ENCODE measurements at regions of chr1 and their contacts with region 1.

Region 1: DNA sequence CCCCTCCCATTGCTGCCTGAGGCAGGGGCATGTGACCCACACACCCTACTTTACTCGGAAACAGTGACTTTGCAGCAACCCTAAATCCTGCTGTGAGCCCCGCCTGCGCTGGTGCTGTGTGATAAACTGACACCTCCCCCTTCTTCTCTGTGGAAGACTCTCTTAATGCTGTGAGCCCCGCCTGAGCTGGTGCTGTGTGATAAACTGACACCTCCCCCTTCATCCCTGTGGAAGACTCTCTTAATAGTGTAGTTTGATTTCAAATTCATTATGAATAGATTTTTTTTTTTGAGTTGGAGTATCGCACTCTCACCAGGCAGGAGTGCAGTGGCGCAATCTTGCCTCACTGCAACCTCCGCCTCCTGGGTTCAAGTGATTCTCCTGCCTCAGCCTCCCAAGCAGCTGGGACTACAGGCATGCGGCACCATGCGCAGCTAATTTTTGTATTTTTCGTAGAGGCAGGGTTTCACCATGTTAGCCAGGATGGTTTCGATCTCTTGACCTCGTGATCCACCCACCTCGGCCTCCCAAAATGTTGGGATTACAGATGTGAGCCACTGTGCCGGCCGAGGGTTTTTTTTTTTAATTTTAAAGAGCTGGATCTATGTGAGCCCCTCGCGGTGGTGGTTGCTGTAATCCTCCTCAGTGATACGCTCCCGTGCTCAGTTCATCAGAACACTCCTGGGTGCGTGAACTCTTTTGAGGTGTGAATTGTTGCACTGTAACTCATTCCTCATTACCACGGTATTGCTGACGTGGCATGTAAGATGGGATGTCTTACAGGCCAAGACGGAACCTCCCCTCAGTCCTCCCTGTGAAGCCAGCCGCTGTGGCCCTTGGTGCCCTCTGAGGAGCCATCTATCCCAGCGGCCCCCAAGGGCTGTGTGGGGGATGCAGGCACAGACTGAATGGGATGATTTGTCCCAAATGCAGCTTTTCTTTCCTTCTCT is 60.3 kb downstream of the GALNT2 start:
- DNase-seq: no peak
- H3K4me3 ChIP-seq: no peak overlapping the region
- H3K27ac ChIP-seq: no peak overlapping the region
- H3K4me1 ChIP-seq: peaks cover 0 to 33% (median 15%) of the 10 kb centered on the region in 4 donors
- H3K27me3 ChIP-seq: no peaks in the 10 kb centered on the region
- CTCF ChIP-seq: no peak

Region 2: DNA sequence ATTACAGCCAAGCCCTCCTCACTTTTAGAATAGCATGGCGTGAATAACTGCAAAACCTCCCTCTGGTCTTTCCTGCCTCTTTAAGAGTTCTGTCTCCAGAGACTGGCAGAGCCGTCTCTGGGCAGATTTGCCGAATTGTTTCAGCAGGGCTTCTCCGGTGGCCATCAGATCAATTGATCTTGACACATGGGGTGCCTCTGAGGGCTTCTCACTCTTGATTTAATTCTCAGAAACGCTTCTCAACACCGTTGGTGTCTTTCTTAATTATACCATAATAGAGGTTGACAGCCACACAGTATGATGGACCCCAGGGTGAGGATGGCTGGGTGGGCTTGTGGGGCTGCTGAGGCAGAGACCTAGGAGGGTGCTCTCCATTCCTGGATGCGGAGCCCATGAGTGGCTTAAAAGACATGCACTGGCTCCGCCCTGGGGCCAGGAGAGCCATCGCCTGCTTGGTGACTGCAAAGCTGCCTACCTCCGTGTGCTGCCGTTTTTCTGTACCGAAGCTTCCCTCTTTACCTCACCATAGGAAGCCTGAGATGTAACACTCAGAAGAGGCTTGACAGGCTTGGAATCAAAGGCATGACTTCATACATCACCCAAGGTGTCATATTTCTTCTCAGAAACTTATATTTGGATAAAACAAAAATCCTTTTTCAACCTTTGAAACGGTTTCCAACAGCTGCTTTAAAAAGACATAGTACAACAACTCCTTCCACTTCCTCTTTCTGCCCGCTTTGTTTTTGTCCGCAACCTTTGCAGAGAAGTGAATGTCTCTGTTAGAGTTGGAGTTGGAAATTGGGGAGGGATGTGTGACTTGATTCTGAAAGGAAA is 22.6 kb after region 1 on chr1:
- intact Hi-C with region 1: loop called (anchors 1 kb)
- DNase-seq: no peak
- H3K4me3 ChIP-seq: no peak overlapping the region
- H3K27ac ChIP-seq: no peak overlapping the region
- H3K4me1 ChIP-seq: peaks cover 6 to 59% (median 24%) of the 10 kb centered on the region in 4 donors
- H3K27me3 ChIP-seq: no peaks in the 10 kb centered on the region
- CTCF ChIP-seq: no peak

Measured in tibial artery (tissue), 4 donors.